ENCODE measurements at regions of chr5 and their contacts with region 1.

Region 1: DNA sequence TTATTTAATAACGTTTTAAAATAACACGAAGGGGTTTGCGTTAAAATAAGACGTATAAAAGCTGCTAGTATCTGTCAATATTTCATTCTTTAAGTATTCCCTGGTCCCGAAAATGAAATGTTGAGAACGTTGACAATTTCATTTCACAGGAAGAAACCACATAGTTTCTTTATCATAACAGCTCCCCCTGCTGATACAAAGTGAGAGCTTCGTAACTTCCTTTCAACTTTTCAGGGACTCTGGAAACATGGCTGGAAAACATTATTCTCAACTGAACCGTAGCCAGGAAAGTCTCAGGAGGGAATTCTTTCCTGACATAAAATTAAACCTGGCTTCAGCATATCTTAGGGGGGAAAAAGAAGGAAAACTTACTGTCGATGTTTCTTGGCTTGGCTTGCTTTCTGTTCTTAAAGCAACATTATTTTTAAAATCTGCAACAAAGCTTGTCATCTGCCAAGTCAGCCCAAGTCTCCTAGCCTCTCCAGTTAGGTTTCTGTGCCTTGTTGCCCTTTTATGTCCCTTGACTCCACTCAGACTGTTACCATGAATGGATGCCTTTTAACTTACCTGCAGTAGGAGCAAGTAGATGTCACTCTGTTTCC is 122.9 kb upstream of the DAB2 start:
- DNase-seq: peak; percentile 34
- ATAC-seq: no peak
- H3K4me3 Mint-ChIP-seq: no peak overlapping the region
- H3K27ac Mint-ChIP-seq: no peak overlapping the region
- H3K4me1 Mint-ChIP-seq: peaks cover 4% of the 10 kb centered on the region
- H3K27me3 Mint-ChIP-seq: peaks cover 8% of the 10 kb centered on the region

Region 2: GRCh38 chr5:39424736-39425637 is 122.7 kb before region 1 on chr5 and contains the start of gene DAB2:
- CTCF ChIA-PET with region 1: interaction called, 12 read pairs
- POLR2A ChIA-PET with region 1: no interaction called
- DNase-seq: peak; percentile 59
- ATAC-seq: peak; percentile 96
- H3K4me3 Mint-ChIP-seq: peak within 1 kb of the TSS; percentile 68
- H3K27ac Mint-ChIP-seq: no peak within 1 kb of the TSS
- H3K4me1 Mint-ChIP-seq: peaks cover 5% of the 10 kb centered on the region
- H3K27me3 Mint-ChIP-seq: peaks cover 44% of the 10 kb centered on the region
- total RNA-seq, gene DAB2: not detected

Measured in activated CD8-positive, alpha-beta T cell treated with anti-CD3 and anti-CD28 coated beads, Interleukin-2, amount 10 ng/mL, durations not matched to agents 7 days and 5 days (primary cell).